Naive thymus-derived CD4-positive, alpha-beta T cell (primary cell): ENCODE measurements at regions of chr1 and their contacts with region 1.

Region 1: DNA sequence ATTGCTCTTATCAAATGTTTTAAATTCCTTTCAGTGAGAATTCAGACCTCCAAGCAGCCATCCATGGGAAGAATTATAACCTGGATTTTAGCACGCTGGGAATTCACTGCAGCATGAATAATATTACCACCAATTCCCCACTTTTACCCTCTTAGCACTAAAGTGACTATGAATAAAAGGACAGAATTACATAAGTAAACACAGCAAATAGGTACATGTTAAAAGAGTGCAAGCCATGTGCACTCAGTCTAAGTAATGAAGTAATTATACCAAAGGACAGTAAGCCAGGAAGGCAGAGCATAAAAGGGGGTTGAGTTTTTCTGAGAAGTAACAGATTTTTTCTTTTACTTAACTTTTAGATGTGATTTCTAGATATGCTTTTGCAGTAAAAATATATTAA is 176.3 kb downstream of the DENND1B start:
- DNase-seq: no peak
- ATAC-seq: no peak
- H3K4me3 ChIP-seq: no peak overlapping the region
- H3K4me3 Mint-ChIP-seq: no peak overlapping the region
- H3K27ac ChIP-seq: no peak overlapping the region
- H3K27ac Mint-ChIP-seq: no peak overlapping the region
- H3K4me1 ChIP-seq: no peaks in the 10 kb centered on the region
- H3K4me1 Mint-ChIP-seq: peaks cover 0 to 3% (median 0%) of the 10 kb centered on the region in 7 donors
- H3K27me3 ChIP-seq: no peaks in the 10 kb centered on the region
- H3K27me3 Mint-ChIP-seq: no peaks in the 10 kb centered on the region

Region 2: DNA sequence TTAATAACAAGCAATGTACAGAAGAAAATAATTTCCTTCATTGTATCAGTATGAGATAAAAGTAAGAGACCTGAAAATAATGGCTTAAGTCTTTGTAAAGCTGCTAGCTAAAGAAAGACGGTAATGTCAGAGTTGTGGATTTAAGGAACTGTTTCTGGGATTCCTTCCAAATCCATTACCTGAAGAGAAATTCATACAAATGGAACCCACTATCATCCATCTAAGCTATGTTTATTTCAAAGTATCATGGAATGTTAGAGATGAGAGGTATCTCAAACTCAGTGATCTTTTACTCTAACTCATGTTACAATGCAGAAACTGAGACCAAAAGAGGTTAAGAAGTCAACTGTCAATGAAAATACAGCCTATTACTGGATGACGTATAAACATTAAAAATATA is 21.4 kb before region 1 on chr1:
- CTCF ChIA-PET with region 1: no interaction called
- POLR2A ChIA-PET with region 1: no interaction called
- intact Hi-C with region 1: loop called in 1 of 2 experiments (anchors 2 kb)
- DNase-seq: no peak
- ATAC-seq: no peak
- H3K4me3 ChIP-seq: no peak overlapping the region
- H3K4me3 Mint-ChIP-seq: no peak overlapping the region
- H3K27ac ChIP-seq: no peak overlapping the region
- H3K27ac Mint-ChIP-seq: no peak overlapping the region
- H3K4me1 ChIP-seq: no peaks in the 10 kb centered on the region
- H3K4me1 Mint-ChIP-seq: peaks cover 0 to 2% (median 0%) of the 10 kb centered on the region in 7 donors
- H3K27me3 ChIP-seq: no peaks in the 10 kb centered on the region
- H3K27me3 Mint-ChIP-seq: no peaks in the 10 kb centered on the region

Region 3: DNA sequence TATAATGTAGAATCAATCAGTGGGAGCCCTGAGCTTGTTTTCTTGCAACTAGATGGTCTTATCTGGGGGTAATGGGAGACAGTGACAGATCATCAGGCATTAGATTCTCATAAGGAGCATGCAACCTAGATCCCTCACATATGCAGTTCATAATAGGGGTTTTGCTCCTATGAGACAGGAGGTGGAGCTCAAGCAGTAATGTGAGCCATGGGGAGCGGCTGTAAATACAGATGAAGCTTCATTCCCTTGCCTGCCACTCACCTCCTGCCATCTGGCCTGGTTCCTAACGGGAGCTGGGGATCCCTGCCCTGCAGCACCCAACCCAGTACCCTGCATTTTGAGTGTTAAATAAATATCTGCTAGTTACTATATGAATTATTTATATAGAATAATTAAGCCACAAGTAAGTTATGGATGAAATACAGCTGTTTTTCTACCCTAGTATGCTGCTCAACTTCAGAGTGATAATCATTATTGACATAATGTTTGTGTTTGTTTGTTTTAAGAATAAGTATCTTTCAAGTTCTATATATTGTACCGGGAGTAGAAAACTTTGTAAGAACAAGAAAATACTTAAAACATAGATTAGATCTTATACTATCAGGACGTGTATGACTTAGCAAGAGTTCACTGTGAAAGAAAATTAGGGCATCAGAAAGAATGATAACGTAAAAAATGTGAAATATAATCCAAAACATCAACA is 11.0 kb before region 1 on chr1:
- CTCF ChIA-PET with region 1: no interaction called
- POLR2A ChIA-PET with region 1: no interaction called
- intact Hi-C with region 1: loop called in 1 of 2 experiments (anchors 2 kb)
- DNase-seq: no peak
- ATAC-seq: no peak
- H3K4me3 ChIP-seq: no peak overlapping the region
- H3K4me3 Mint-ChIP-seq: no peak overlapping the region
- H3K27ac ChIP-seq: no peak overlapping the region
- H3K27ac Mint-ChIP-seq: no peak overlapping the region
- H3K4me1 ChIP-seq: no peaks in the 10 kb centered on the region
- H3K4me1 Mint-ChIP-seq: no peaks in the 10 kb centered on the region
- H3K27me3 ChIP-seq: no peaks in the 10 kb centered on the region
- H3K27me3 Mint-ChIP-seq: no peaks in the 10 kb centered on the region

Region 4: GRCh38 chr1:198102454-198102827 is 503.5 kb after region 1 on chr1:
- CTCF ChIA-PET with region 1: no interaction called
- POLR2A ChIA-PET with region 1: no interaction called
- intact Hi-C with region 1: no loop called
- DNase-seq: peak in 4 of 9 donors; percentile 10 to 25 (median 16)
- ATAC-seq: peak; percentile 68
- H3K4me3 ChIP-seq: no peak overlapping the region
- H3K4me3 Mint-ChIP-seq: peak overlapping the region in 7 of 10 donors; percentile 16 to 49 (median 36)
- H3K27ac ChIP-seq: no peak overlapping the region
- H3K27ac Mint-ChIP-seq: peak overlapping the region in 5 of 9 donors; percentile 3 to 65 (median 24)
- H3K4me1 ChIP-seq: peaks cover 10 to 15% of the 10 kb centered on the region in 2 donors
- H3K4me1 Mint-ChIP-seq: peaks cover 12 to 27% (median 17%) of the 10 kb centered on the region in 7 donors
- H3K27me3 ChIP-seq: no peaks in the 10 kb centered on the region
- H3K27me3 Mint-ChIP-seq: no peaks in the 10 kb centered on the region

Region 5: DNA sequence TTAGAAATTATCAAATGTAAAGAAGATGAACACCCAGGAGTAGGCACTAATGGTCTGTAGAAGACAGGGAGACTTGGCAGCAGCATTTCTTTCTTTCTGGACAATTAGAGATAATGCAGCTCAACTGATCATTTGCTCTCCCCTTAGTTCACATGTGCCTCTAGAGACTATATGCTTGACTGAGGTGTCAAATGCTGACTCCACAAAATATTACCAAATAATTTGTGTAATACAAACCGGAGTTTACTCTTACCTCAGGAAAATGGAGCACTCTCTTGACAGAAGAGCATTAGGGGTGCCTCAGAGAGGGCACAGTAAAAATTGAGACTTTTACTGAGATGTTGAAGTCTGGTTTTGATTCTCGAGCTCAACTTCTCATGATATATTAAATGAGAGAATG is 809.8 kb after region 1 on chr1:
- CTCF ChIA-PET with region 1: no interaction called
- POLR2A ChIA-PET with region 1: no interaction called
- intact Hi-C with region 1: no loop called
- DNase-seq: no peak
- ATAC-seq: no peak
- H3K4me3 ChIP-seq: no peak overlapping the region
- H3K4me3 Mint-ChIP-seq: no peak overlapping the region
- H3K27ac ChIP-seq: no peak overlapping the region
- H3K27ac Mint-ChIP-seq: no peak overlapping the region
- H3K4me1 ChIP-seq: no peaks in the 10 kb centered on the region
- H3K4me1 Mint-ChIP-seq: no peaks in the 10 kb centered on the region
- H3K27me3 ChIP-seq: no peaks in the 10 kb centered on the region
- H3K27me3 Mint-ChIP-seq: peaks cover 0 to 11% (median 7%) of the 10 kb centered on the region in 5 donors